WTC11 (cell line): ENCODE measurements at regions of chr5 and their contacts with region 1.

Region 1: DNA sequence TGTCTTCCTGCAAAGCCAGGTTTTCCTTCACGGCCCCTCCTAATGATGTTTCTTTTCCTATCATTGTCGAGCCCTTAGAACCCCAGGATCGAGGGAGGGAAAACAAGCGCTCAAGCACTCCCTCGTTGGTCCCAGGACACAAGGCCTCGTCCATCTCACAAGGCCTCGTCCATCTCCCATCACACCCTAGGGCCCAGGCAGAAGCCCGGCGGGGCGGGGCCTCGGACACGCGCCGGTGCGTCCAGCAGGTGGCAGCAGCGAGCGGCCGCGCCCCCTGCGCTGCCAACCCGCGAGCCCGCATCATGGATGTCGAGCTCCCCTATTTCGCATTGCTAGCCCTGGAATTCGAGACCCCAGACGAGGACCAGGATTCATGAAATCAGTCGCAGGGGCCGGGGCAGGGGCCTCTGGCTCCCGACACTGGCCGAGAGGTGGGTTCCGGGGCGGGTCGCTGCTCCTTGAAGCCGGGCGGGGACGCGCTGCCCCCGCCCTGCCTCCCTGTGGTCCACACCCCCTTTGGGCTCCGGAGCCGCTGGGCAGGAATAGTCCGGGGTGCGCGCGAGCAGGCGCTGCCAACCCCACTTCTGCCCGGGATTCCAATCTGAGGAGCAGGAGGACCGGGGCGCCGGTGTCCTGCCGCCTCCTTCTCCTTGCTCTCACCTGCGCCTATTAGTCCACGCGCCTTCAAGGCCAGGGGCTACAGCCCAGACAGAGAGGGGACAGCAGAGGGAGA is at the start of gene ABLIM3:
- DNase-seq: peak; percentile 76
- ATAC-seq: peak; percentile 84
- H3K4me3 Mint-ChIP-seq: peak within 1 kb of the TSS; percentile 71
- H3K27ac Mint-ChIP-seq: no peak within 1 kb of the TSS
- H3K4me1 Mint-ChIP-seq: peaks cover 7% of the 10 kb centered on the region; the same call in 1 of the 2 replicates
- H3K27me3 Mint-ChIP-seq: peaks cover 34% of the 10 kb centered on the region
- CTCF ChIP-seq: peak; percentile 92
- total RNA-seq, gene ABLIM3: 0.33 to 0.69 TPM (median 0.46 TPM) in 3 replicates

Region 2: DNA sequence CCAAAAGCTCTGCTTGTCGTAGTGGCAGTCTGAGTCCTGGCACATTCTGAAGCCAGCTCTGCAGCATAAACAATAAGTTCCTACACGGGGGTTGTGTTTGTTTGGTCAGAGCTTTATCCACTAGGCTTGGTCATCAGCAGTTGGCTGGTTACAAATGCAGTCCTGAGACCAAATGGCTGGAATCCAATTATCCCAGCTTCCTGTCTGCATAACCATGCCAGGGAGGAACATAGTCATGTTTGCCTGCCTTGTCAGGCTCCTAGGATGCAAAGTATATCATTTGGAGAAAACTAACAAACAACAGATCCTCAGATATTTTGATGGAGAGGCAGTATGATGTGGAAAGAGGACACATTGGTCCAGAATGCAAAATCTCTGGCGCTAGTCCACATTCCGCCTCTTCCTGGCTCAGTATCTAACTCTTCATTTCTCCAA is 671.9 kb before region 1 on chr5:
- CTCF ChIA-PET with region 1: no interaction called
- POLR2A ChIA-PET with region 1: no interaction called
- DNase-seq: no peak
- ATAC-seq: no peak
- H3K4me3 Mint-ChIP-seq: no peak overlapping the region
- H3K27ac Mint-ChIP-seq: no peak overlapping the region
- H3K4me1 Mint-ChIP-seq: no peaks in the 10 kb centered on the region
- H3K27me3 Mint-ChIP-seq: no peaks in the 10 kb centered on the region; the same call in 1 of the 2 replicates
- CTCF ChIP-seq: no peak

Region 3: GRCh38 chr5:149125386-149125891 is 16.0 kb before region 1 on chr5:
- CTCF ChIA-PET with region 1: interaction called, 34 read pairs
- POLR2A ChIA-PET with region 1: no interaction called
- DNase-seq: peak; percentile 65
- ATAC-seq: peak; percentile 95
- H3K4me3 Mint-ChIP-seq: no peak overlapping the region
- H3K27ac Mint-ChIP-seq: no peak overlapping the region
- H3K4me1 Mint-ChIP-seq: peaks cover 23% of the 10 kb centered on the region
- H3K27me3 Mint-ChIP-seq: no peaks in the 10 kb centered on the region
- CTCF ChIP-seq: no peak

Region 4: GRCh38 chr5:149212198-149212951 is 71.0 kb after region 1 on chr5:
- CTCF ChIA-PET with region 1: interaction called, 15 read pairs
- POLR2A ChIA-PET with region 1: no interaction called
- DNase-seq: no peak
- ATAC-seq: no peak
- H3K4me3 Mint-ChIP-seq: no peak overlapping the region
- H3K27ac Mint-ChIP-seq: no peak overlapping the region
- H3K4me1 Mint-ChIP-seq: no peaks in the 10 kb centered on the region
- H3K27me3 Mint-ChIP-seq: no peaks in the 10 kb centered on the region; the same call in 1 of the 2 replicates
- CTCF ChIP-seq: no peak

Region 5: DNA sequence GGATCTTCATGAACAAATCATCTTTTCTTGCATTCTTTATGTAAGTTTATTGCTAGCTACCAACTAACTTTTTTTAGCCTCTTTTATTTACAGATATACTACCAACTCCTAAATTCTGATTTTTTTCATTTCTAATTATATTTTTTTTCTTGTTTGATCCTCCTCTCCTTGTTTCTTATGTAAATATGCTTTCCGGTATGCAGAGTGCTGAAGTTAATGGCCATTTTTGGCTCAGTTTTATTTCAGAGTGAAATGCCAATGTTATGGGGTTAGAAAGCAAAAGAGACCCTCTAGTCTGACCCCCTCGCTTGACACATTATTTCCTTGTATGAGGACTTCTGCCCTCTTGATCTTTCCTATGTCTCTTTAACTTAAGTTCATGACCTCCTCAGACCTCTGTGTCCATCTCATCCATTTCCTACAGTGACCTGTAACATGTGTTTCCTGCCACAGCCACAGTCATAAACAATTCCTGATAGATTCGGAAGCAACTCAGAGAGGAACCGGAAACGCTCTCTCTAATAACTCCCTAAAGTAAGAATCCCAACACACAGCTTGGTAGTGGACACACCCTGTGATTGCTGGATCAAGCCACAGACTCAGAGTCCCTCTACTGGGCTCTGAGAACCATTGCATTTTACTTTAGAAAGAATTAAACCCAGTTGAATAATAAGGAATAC is 87.4 kb after region 1 on chr5:
- CTCF ChIA-PET with region 1: interaction called, 54 read pairs
- POLR2A ChIA-PET with region 1: no interaction called
- DNase-seq: no peak
- ATAC-seq: peak; percentile 92
- H3K4me3 Mint-ChIP-seq: no peak overlapping the region
- H3K27ac Mint-ChIP-seq: no peak overlapping the region
- H3K4me1 Mint-ChIP-seq: peaks cover 12% of the 10 kb centered on the region
- H3K27me3 Mint-ChIP-seq: no peaks in the 10 kb centered on the region; the same call in none of the 2 replicates
- CTCF ChIP-seq: no peak

Region 6: DNA sequence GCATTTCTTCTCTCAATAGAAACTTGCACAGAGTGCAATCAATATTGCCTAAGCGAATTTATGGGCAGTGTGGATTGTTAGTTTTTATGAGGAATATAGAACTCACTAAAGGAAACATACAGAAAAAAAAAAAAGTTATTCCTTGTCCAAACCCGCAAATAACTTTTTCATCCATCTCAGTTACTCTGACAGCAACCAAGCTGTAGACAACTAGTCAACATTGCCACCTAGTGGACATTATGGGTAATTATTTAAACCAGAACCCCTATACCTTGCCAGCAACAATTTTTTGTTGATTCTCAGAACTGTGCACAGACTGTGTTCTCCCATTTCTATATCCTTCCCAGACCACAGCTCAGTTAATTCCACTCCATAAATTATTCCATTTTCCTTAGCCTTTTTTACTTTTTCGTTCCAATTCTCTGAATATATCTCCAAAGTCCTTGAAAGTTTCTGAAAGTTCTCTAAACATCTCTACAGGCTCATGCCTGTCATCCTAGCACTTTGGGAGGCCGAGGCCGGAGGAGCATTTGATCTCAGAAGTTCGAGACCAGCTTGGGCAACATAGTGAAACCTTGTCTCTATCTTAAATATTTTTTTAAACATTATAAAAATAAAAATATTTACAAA is 127.7 kb after region 1 on chr5:
- CTCF ChIA-PET with region 1: interaction called, 28 read pairs
- POLR2A ChIA-PET with region 1: no interaction called
- DNase-seq: no peak
- ATAC-seq: 0 out of 2 replicates have a peak, but pooled peaks have one; percentile 4
- H3K4me3 Mint-ChIP-seq: no peak overlapping the region
- H3K27ac Mint-ChIP-seq: no peak overlapping the region
- H3K4me1 Mint-ChIP-seq: peaks cover 33% of the 10 kb centered on the region
- H3K27me3 Mint-ChIP-seq: peaks cover 51% of the 10 kb centered on the region
- CTCF ChIP-seq: peak; percentile 85